ENCODE measurements at regions of chr19 and their contacts with region 1.

Region 1: GRCh38 chr19:6602729-6603114 is 11.8 kb upstream of the CD70 start:
- DNase-seq: no peak
- H3K4me3 Mint-ChIP-seq: no peak overlapping the region
- H3K27ac Mint-ChIP-seq: no peak overlapping the region
- H3K4me1 Mint-ChIP-seq: peaks cover 35% of the 10 kb centered on the region
- H3K27me3 Mint-ChIP-seq: peaks cover 2% of the 10 kb centered on the region

Region 2: DNA sequence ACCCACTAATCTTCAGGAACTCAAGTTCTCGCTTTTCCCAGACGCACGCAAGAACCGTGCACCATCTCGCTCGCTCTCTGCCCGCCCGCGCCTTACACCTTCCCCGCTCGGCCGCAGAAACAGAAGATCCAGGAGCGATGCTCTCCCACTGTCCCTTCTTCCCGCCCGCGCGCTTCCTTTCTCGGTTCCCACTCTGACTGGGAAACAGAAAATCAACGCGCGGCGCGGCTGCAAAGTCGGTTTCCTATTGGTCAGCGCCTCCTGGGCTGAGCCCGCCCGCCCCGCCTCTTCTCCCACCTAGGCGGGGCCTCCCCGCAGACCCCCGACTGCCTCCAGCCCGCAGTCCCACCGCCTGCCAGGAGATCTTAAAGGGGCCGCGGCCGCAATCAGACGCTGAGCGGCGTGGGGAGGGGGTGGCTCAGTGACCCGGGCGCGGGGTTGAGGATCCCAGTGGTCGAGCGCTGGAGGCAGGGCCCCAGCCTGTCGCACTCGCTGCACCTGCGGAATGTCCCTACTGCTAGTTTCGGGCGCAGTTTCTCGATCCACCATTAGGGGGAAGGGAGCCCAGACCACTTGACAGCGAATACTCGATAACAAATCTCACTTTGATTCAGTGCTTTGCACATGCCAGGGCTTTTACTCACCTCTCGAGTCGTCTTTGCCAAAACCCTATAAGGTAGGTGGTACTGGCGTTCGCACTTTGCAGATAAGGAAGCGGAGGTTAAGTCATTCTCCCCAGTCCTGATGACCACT is 142.4 kb before region 1 on chr19:
- CTCF ChIA-PET with region 1: no interaction called
- POLR2A ChIA-PET with region 1: no interaction called
- intact Hi-C with region 1: no loop called
- DNase-seq: peak; percentile 98
- H3K4me3 Mint-ChIP-seq: peak overlapping the region; percentile 91
- H3K27ac Mint-ChIP-seq: peak overlapping the region; percentile 88
- H3K4me1 Mint-ChIP-seq: peaks cover 21% of the 10 kb centered on the region
- H3K27me3 Mint-ChIP-seq: no peaks in the 10 kb centered on the region

Region 3: DNA sequence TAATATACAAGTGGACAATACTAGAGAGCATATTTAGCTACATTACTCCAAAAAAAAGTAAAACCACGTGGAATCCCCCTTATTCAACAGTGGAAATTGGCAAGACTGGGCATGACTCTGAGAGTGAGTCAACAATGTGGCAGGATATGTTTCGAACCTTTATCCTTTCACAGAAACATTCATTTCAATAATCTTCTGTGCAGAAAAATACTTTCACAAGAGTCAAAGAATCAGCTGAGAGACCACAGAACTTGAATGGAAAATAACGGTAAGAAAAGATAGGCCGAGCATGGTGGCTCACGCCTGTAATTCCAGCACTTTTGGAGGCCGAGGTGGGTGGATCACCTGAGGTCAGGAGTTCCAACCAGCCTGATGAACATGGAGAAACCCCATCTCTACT is 13.3 kb after region 1 on chr19:
- CTCF ChIA-PET with region 1: interaction called, 4 read pairs
- POLR2A ChIA-PET with region 1: interaction called, 3 read pairs
- intact Hi-C with region 1: loop called (anchors 1 kb)
- DNase-seq: peak; percentile 64
- H3K4me3 Mint-ChIP-seq: no peak overlapping the region
- H3K27ac Mint-ChIP-seq: peak overlapping the region; percentile 59
- H3K4me1 Mint-ChIP-seq: peaks cover 32% of the 10 kb centered on the region
- H3K27me3 Mint-ChIP-seq: peaks cover 28% of the 10 kb centered on the region